Activated B cell treated with CpG ODN at 0.5 μM for 24 hours (primary cell): ENCODE measurements at regions of chr2 and their contacts with region 1.

Region 1: DNA sequence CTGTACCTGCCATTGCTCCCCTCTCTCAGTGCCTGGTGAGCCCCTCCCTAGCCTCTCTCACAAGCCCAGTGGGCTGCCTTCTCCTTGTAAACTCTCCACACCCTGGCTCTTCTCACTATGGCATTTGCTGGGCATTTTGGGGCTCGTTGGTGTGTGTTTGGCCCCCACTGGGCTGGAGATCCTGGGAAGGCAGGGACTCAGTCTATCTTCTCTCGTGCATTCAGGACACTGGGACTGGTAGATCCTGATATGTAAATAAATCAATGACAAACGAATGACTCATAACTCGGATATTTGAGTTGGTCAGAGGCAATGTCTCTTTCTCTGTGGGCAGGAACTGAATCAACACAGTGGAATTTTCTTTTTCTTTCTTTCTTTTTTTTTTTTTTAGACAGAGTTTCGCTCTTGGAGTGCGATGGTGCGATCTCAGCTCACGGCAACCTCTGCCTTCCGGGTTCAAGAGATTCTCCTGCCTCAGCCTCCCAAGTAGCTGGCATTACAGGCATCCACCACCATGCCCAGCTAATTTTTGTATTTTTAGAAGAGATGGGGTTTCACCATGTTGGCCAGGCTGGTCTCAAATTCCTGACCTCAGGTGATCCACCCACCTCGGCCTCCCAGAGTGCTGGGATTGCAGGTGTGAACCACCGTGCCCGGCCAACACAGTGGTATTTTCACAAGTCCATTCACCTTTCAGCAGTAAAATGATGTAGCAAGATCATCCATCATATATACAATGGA is 144.6 kb upstream of the SPRED2 start:
- DNase-seq: no peak
- ATAC-seq: no peak
- H3K4me3 Mint-ChIP-seq: no peak overlapping the region
- H3K27ac Mint-ChIP-seq: no peak overlapping the region
- H3K4me1 Mint-ChIP-seq: peaks cover 6% of the 10 kb centered on the region
- H3K27me3 Mint-ChIP-seq: peaks cover 2% of the 10 kb centered on the region
- CTCF ChIP-seq: no peak

Region 2: GRCh38 chr2:63692002-63692606 is 1884.9 kb before region 1 on chr2:
- CTCF ChIA-PET with region 1: no interaction called
- POLR2A ChIA-PET with region 1: no interaction called
- intact Hi-C with region 1: loop called (anchors 2 kb)
- DNase-seq: no peak
- ATAC-seq: peak; percentile 18
- H3K4me3 Mint-ChIP-seq: no peak overlapping the region
- H3K27ac Mint-ChIP-seq: no peak overlapping the region
- H3K4me1 Mint-ChIP-seq: no peaks in the 10 kb centered on the region
- H3K27me3 Mint-ChIP-seq: no peaks in the 10 kb centered on the region
- CTCF ChIP-seq: peak; percentile 53

Region 3: GRCh38 chr2:64873472-64873924 is 703.5 kb before region 1 on chr2:
- CTCF ChIA-PET with region 1: no interaction called
- POLR2A ChIA-PET with region 1: no interaction called
- intact Hi-C with region 1: loop called (anchors 1 kb)
- DNase-seq: peak; percentile 86
- ATAC-seq: peak; percentile 99
- H3K4me3 Mint-ChIP-seq: peak overlapping the region; percentile 52
- H3K27ac Mint-ChIP-seq: no peak overlapping the region
- H3K4me1 Mint-ChIP-seq: peaks cover 8% of the 10 kb centered on the region
- H3K27me3 Mint-ChIP-seq: no peaks in the 10 kb centered on the region
- CTCF ChIP-seq: peak; percentile 90

Region 4: DNA sequence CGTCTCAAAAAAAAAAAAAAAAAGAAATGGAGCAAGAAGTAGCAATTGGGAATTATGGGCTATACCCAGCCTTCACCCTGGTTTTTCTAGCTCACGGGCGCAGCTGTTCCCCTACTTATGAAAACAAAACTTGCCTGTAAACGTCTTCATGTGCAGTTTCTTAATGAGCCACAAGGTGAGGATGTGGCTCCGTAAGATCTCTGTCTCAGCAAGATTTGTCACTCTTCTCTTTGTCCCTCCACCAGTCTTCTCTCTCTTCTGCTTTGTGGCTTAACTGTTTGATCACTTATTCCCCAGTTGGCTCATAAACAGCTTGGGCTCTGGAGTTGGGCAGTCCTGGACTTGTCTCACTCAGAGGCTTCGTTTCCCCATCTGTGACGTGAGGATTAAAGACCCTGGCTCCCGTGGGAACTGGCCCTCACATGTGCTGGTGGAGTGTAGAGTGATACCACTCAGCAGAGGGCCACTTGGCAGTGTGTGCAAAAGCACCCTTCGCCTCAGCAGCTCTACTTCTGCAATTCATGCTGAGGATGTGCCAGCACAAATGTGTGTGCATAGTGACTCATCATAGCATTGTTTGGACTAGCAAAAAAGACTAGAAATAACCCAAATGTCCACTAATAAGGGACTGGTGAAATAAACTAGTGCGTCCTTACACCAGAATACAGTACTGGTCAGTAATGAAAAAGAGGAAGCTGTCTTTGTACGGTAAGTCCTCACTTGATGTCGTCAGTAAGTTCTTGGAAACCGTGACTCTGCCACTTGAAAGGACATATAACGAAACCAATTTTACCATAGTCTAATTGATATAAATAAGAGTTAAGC is 512.1 kb before region 1 on chr2:
- CTCF ChIA-PET with region 1: interaction called, 17 read pairs
- POLR2A ChIA-PET with region 1: no interaction called
- intact Hi-C with region 1: loop called (anchors 1 kb)
- DNase-seq: peak; percentile 63
- ATAC-seq: peak; percentile 89
- H3K4me3 Mint-ChIP-seq: peak overlapping the region; percentile 46
- H3K27ac Mint-ChIP-seq: peak overlapping the region; percentile 89
- H3K4me1 Mint-ChIP-seq: peaks cover 38% of the 10 kb centered on the region
- H3K27me3 Mint-ChIP-seq: no peaks in the 10 kb centered on the region
- CTCF ChIP-seq: peak; percentile 43

Region 5: GRCh38 chr2:65227425-65228262 is 349.4 kb before region 1 on chr2 and contains the start of gene ACTR2:
- CTCF ChIA-PET with region 1: no interaction called
- POLR2A ChIA-PET with region 1: interaction called, 10 read pairs
- intact Hi-C with region 1: no loop called
- DNase-seq: peak; percentile 88
- ATAC-seq: peak; percentile 90
- H3K4me3 Mint-ChIP-seq: peak within 1 kb of the TSS; percentile 99
- H3K27ac Mint-ChIP-seq: peak within 1 kb of the TSS; percentile 100
- H3K4me1 Mint-ChIP-seq: peaks cover 45% of the 10 kb centered on the region
- H3K27me3 Mint-ChIP-seq: no peaks in the 10 kb centered on the region
- CTCF ChIP-seq: no peak
- total RNA-seq, gene ACTR2: 484 and 493 TPM in 2 replicates

Region 6: DNA sequence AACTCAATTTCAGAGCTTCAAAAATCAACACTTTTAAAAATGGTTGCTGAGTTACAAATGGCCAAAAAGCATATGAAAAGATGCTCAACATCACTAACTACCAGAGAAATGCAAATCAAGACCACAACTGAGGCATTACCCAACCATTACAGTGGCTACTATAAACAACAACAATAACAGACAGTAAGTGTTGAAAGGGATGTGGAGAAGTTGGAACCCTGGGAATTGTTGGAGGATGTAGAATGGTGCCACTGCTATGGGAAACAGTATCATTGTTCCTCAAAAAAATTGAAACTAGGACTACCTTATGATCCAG is 28.7 kb after region 1 on chr2:
- CTCF ChIA-PET with region 1: interaction called, 3 read pairs
- POLR2A ChIA-PET with region 1: no interaction called
- intact Hi-C with region 1: loop called (anchors 1 kb)
- DNase-seq: no peak
- ATAC-seq: no peak
- H3K4me3 Mint-ChIP-seq: peak overlapping the region; percentile 75
- H3K27ac Mint-ChIP-seq: peak overlapping the region; percentile 94
- H3K4me1 Mint-ChIP-seq: peaks cover 82% of the 10 kb centered on the region
- H3K27me3 Mint-ChIP-seq: no peaks in the 10 kb centered on the region
- CTCF ChIP-seq: no peak

Region 7: GRCh38 chr2:65658881-65659280 is 81.8 kb after region 1 on chr2:
- CTCF ChIA-PET with region 1: no interaction called
- POLR2A ChIA-PET with region 1: no interaction called
- intact Hi-C with region 1: no loop called
- DNase-seq: no peak
- ATAC-seq: no peak
- H3K4me3 Mint-ChIP-seq: no peak overlapping the region
- H3K27ac Mint-ChIP-seq: no peak overlapping the region
- H3K4me1 Mint-ChIP-seq: no peaks in the 10 kb centered on the region
- H3K27me3 Mint-ChIP-seq: peaks cover 20% of the 10 kb centered on the region
- CTCF ChIP-seq: no peak